Activated T-helper 1 cell treated with anti-CD3 and anti-CD28 coated beads, Interleukin-12 subunit alpha, Interleukin-12 subunit beta, Interleukin-2, Interleukin-4 antibody, amounts not matched to agents 30 ng/mL and 10 ng/mL and 1 ng/mL, durations not matched to agents 14 hours and 24 hours and 36 hours (primary cell): ENCODE measurements at regions of chr12 and their contacts with region 1.

Region 1: DNA sequence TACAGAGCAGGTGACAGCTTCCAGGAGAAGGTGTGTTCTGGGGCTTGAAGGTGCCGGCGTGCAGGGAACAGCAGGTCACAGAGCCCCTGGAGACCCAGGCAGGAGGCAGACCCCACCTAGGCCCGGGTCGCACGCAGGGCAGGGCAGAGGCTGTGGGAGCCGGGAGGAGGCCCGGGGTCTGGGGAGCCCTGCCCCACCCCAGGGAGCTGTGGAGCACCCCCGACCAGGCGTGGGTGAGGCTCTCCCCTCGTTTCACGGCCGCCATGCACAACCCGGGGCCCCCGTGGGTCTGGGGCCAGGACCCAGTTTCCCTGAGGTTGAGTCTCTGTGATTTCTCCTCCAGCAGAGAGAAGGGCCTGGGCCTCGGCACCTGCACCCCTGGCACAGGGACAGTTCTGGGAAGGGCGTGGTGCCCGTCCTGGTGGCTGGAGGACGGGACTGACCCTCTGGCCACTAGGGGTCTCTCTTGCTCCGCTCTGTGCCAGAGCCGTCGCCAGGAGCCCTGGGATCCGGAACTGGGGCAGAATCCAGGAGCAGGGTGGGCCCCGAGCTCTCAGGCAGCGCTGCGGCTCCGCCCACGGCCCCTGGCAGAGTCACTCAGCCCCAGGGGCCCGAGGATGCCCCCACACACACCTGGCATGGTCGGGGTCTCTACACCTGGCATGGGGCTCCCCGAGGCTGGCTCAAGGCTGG is 75.2 kb upstream of the FBRSL1 start:
- DNase-seq: peak; percentile 64
- H3K4me3 Mint-ChIP-seq: no peak overlapping the region
- H3K27ac Mint-ChIP-seq: no peak overlapping the region
- H3K4me1 Mint-ChIP-seq: no peaks in the 10 kb centered on the region
- H3K27me3 Mint-ChIP-seq: peaks cover 2% of the 10 kb centered on the region

Region 2: GRCh38 chr12:132153501-132154340 is 261.1 kb before region 1 on chr12:
- intact Hi-C with region 1: loop called (anchors 1 kb)
- DNase-seq: peak; percentile 61
- H3K4me3 Mint-ChIP-seq: no peak overlapping the region
- H3K27ac Mint-ChIP-seq: no peak overlapping the region
- H3K4me1 Mint-ChIP-seq: no peaks in the 10 kb centered on the region
- H3K27me3 Mint-ChIP-seq: no peaks in the 10 kb centered on the region

Region 3: GRCh38 chr12:132523576-132524331 is 109.0 kb after region 1 on chr12:
- intact Hi-C with region 1: loop called (anchors 1 kb)
- DNase-seq: peak; percentile 48
- H3K4me3 Mint-ChIP-seq: no peak overlapping the region
- H3K27ac Mint-ChIP-seq: no peak overlapping the region
- H3K4me1 Mint-ChIP-seq: no peaks in the 10 kb centered on the region
- H3K27me3 Mint-ChIP-seq: no peaks in the 10 kb centered on the region

Region 4: GRCh38 chr12:132560614-132561426 is 146.0 kb after region 1 on chr12:
- intact Hi-C with region 1: loop called (anchors 1 kb)
- DNase-seq: peak; percentile 57
- H3K4me3 Mint-ChIP-seq: peak overlapping the region; percentile 80
- H3K27ac Mint-ChIP-seq: no peak overlapping the region
- H3K4me1 Mint-ChIP-seq: peaks cover 13% of the 10 kb centered on the region
- H3K27me3 Mint-ChIP-seq: peaks cover 5% of the 10 kb centered on the region